ENCODE measurements at regions of chr1 and their contacts with region 1.

Region 1: GRCh38 chr1:205354259-205354904 is 2.3 kb downstream of the KLHDC8A start:
- DNase-seq: peak; percentile 35 to 76
- ATAC-seq: peak; percentile 65 to 83; a peak in 4 of 6 replicates
- H3K4me3 ChIP-seq: no peak overlapping the region
- H3K27ac ChIP-seq: no peak overlapping the region; a peak in 1 of 6 replicates
- H3K4me1 ChIP-seq: peaks cover 25% of the 10 kb centered on the region
- CTCF ChIP-seq: peak; percentile 86
- EP300 ChIP-seq: no peak
- POLR2A ChIP-seq: no peak
- RAD21 ChIP-seq: peak; percentile 74 to 79

Region 2: GRCh38 chr1:205335643-205336091 is 18.7 kb before region 1 on chr1:
- CTCF ChIA-PET with region 1: interaction called, 3,627 read pairs
- POLR2A ChIA-PET with region 1: no interaction called
- DNase-seq: peak; percentile 89 to 90
- ATAC-seq: peak; percentile 91 to 97
- H3K4me3 ChIP-seq: no peak overlapping the region
- H3K27ac ChIP-seq: no peak overlapping the region
- H3K4me1 ChIP-seq: peaks cover under 1% of the 10 kb centered on the region; the same call in 1 of the 3 replicates
- CTCF ChIP-seq: peak; percentile 99
- EP300 ChIP-seq: no peak
- POLR2A ChIP-seq: no peak
- RAD21 ChIP-seq: peak; percentile 88 to 92

Region 3: GRCh38 chr1:205375835-205376545 is 21.6 kb after region 1 on chr1:
- CTCF ChIA-PET with region 1: interaction called, 49 read pairs
- POLR2A ChIA-PET with region 1: interaction called, 4 read pairs
- DNase-seq: peak; percentile 54 to 69
- ATAC-seq: peak; percentile 84 to 88
- H3K4me3 ChIP-seq: no peak overlapping the region
- H3K27ac ChIP-seq: peak overlapping the region; percentile 36 to 66; a peak in 5 of 6 replicates
- H3K4me1 ChIP-seq: peaks cover 44% of the 10 kb centered on the region
- CTCF ChIP-seq: no peak
- EP300 ChIP-seq: no peak
- POLR2A ChIP-seq: no peak
- RAD21 ChIP-seq: no peak

Region 4: GRCh38 chr1:205396967-205397616 is 42.7 kb after region 1 on chr1:
- CTCF ChIA-PET with region 1: interaction called, 18 read pairs
- POLR2A ChIA-PET with region 1: no interaction called
- DNase-seq: peak; percentile 61 to 67
- ATAC-seq: peak; percentile 68 to 85; a peak in 5 of 6 replicates
- H3K4me3 ChIP-seq: no peak overlapping the region
- H3K27ac ChIP-seq: no peak overlapping the region
- H3K4me1 ChIP-seq: no peaks in the 10 kb centered on the region
- CTCF ChIP-seq: peak; percentile 71
- EP300 ChIP-seq: no peak
- POLR2A ChIP-seq: no peak
- RAD21 ChIP-seq: peak; percentile 81 to 89

Region 5: GRCh38 chr1:205430696-205431305 is 76.4 kb after region 1 on chr1:
- CTCF ChIA-PET with region 1: interaction called, 61 read pairs
- POLR2A ChIA-PET with region 1: interaction called, 3 read pairs
- DNase-seq: peak; percentile 44 to 60
- ATAC-seq: peak; percentile 79 to 88
- H3K4me3 ChIP-seq: peak overlapping the region; percentile 48
- H3K27ac ChIP-seq: peak overlapping the region; percentile 72 to 80
- H3K4me1 ChIP-seq: 0 out of 3 replicates have a peak, but pooled peaks cover 2% of the 10 kb centered on the region
- CTCF ChIP-seq: peak; percentile 99
- EP300 ChIP-seq: no peak
- POLR2A ChIP-seq: no peak
- RAD21 ChIP-seq: peak; percentile 79 to 88

Region 6: GRCh38 chr1:205477759-205478247 is 123.4 kb after region 1 on chr1:
- CTCF ChIA-PET with region 1: interaction called, 191 read pairs
- POLR2A ChIA-PET with region 1: no interaction called
- DNase-seq: peak; percentile 52 to 84
- ATAC-seq: peak; percentile 49 to 84
- H3K4me3 ChIP-seq: no peak overlapping the region
- H3K27ac ChIP-seq: peak overlapping the region; percentile 58 to 66; a peak in 4 of 6 replicates
- H3K4me1 ChIP-seq: peaks cover 17% of the 10 kb centered on the region
- CTCF ChIP-seq: no peak
- EP300 ChIP-seq: no peak
- POLR2A ChIP-seq: no peak
- RAD21 ChIP-seq: no peak

Region 7: DNA sequence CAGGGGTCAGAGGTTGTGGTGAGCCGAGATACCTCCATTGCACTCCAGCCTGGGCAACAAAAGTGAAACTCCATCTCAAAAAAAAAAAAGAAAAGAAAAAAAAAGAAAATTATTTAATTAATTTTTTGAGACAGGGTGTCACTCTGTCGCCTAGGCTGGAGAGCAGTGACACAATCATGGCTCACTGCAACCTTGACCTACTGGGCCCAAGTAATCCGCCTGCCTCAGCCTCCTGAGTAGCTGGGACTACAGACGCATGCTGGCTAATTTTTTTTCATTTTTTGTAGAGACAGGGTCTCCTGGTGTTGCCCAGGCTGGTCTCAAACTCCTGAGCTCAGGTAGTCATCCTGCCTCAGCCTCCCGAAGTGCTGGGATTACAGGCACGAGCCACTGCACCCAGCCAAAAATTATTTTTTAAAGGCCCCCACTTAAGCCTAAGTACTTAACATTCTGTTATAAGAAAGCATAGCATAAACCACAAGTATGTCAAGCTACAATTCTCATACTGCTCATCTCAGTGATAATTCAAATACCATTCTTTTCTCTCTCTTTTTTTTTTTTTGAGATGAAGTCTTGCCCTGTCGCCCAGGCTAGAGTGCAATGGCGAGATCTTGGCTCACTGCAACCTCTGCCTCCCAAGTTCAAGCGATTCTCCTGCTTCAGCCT is 375.7 kb after region 1 on chr1:
- CTCF ChIA-PET with region 1: no interaction called
- POLR2A ChIA-PET with region 1: no interaction called
- DNase-seq: no peak
- ATAC-seq: no peak; a peak in 1 of 6 replicates
- H3K4me3 ChIP-seq: no peak overlapping the region
- H3K27ac ChIP-seq: no peak overlapping the region
- H3K4me1 ChIP-seq: peaks cover 33% of the 10 kb centered on the region
- CTCF ChIP-seq: no peak
- EP300 ChIP-seq: no peak
- POLR2A ChIP-seq: no peak
- RAD21 ChIP-seq: no peak

Region 8: GRCh38 chr1:205919026-205919746 is 564.8 kb after region 1 on chr1:
- CTCF ChIA-PET with region 1: no interaction called
- POLR2A ChIA-PET with region 1: no interaction called
- DNase-seq: peak; percentile 85 to 86
- ATAC-seq: peak; percentile 94 to 96
- H3K4me3 ChIP-seq: no peak overlapping the region
- H3K27ac ChIP-seq: peak overlapping the region; percentile 48 to 71; a peak in 4 of 6 replicates
- H3K4me1 ChIP-seq: peaks cover 8% of the 10 kb centered on the region
- CTCF ChIP-seq: peak; percentile 93
- EP300 ChIP-seq: no peak
- POLR2A ChIP-seq: no peak
- RAD21 ChIP-seq: peak; percentile 98 to 99

Measured in A549 (cell line).